CD8-positive, alpha-beta memory T cell (primary cell): ENCODE measurements at regions of chr16 and their contacts with region 1.

Region 1: DNA sequence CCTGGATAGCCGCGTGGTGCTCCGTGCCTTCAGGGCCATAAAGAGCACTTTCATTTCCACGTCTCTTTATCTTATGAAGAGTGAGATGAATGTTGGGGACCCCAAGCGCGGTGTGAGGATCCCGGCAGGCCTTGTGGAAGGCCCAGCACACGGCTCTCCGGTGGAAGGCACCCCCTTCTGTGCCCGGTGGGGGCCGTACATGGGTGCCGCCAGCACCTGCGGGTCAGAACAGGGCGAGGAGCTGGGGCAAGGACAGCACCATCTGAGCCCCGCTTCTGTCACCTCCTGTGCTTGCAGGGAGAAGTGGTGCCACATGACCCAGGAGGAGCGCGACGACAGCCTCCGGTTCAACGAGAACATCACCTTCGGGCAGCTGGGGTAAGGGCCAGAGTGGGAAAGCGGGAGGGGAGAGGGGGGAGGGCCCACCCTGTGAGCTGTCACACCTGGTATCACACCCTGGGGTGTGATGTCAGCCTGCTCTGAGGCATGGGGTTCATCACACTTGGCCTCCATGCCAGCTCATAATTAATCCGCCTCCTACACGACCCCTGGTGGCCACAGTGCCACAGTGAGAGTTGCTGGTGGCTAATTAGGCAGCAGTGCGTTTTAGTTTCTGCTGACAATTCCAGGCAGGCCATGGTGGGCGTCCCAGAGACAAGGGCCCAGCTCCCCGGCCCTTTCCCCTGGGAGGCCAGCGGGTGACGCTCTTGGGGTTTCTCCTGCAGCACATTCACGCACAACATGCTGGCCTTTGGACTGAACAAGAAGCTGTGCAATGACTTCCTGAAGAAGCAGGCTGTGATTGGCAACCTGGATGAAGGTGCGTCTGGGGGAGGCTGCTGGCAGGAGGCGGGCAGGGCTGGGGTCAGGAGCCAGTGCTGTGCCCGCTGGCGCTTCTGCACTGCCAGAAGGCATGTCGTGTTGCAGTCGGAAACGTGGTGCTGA is 25.7 kb downstream of the CIBAR2 start:
- DNase-seq: peak; percentile 47 to 85 (median 67)
- H3K4me3 ChIP-seq: no peak overlapping the region
- H3K4me3 Mint-ChIP-seq: no peak overlapping the region
- H3K27ac ChIP-seq: no peak overlapping the region
- H3K27ac Mint-ChIP-seq: peak overlapping the region in 2 of 8 donors; percentile 29 to 35
- H3K4me1 ChIP-seq: peaks cover 10% of the 10 kb centered on the region
- H3K4me1 Mint-ChIP-seq: peaks cover 7 to 31% (median 7%) of the 10 kb centered on the region in 3 donors
- H3K27me3 ChIP-seq: no peaks in the 10 kb centered on the region
- H3K27me3 Mint-ChIP-seq: no peaks in the 10 kb centered on the region

Region 2: GRCh38 chr16:84726079-84726668 is 360.4 kb before region 1 on chr16:
- CTCF ChIA-PET with region 1: no interaction called
- POLR2A ChIA-PET with region 1: no interaction called
- DNase-seq: peak; percentile 62 to 85 (median 77)
- H3K4me3 ChIP-seq: peak overlapping the region; percentile 15
- H3K4me3 Mint-ChIP-seq: peak overlapping the region in 6 of 7 donors; percentile 29 to 68 (median 62)
- H3K27ac ChIP-seq: no peak overlapping the region
- H3K27ac Mint-ChIP-seq: peak overlapping the region in 4 of 8 donors; percentile 56 to 83 (median 78)
- H3K4me1 ChIP-seq: peaks cover 31% of the 10 kb centered on the region
- H3K4me1 Mint-ChIP-seq: peaks cover 47 to 71% (median 70%) of the 10 kb centered on the region in 3 donors
- H3K27me3 ChIP-seq: no peaks in the 10 kb centered on the region
- H3K27me3 Mint-ChIP-seq: no peaks in the 10 kb centered on the region

Region 3: DNA sequence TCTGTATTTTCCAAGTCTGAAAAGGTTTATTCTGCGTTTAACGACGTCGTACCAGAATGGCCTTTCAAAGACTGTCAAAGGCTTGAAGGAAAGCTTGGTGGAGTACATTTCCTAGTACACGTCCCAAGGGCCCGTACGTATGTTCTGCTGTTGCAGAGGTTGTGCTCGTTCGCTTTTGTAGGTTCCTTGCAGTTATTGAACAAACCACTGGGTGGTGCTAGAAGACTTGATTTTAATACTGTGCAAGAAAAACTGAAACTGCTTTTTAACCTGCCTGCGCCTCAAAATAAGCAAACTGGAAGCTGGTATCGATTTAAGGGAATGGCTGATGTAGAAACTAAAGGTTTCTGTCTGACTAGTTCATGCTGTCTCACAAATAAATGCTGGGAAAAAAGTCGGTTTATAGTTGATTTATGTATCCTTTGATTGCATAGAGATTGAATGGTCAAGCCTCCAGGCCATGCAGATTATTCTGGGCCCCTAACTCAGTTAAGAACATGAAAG is 332.2 kb before region 1 on chr16:
- CTCF ChIA-PET with region 1: interaction called, 13 read pairs
- POLR2A ChIA-PET with region 1: no interaction called
- DNase-seq: peak; percentile 36 to 78 (median 69)
- H3K4me3 ChIP-seq: peak overlapping the region; percentile 21
- H3K4me3 Mint-ChIP-seq: peak overlapping the region in 6 of 7 donors; percentile 51 to 78 (median 64)
- H3K27ac ChIP-seq: peak overlapping the region; percentile 21
- H3K27ac Mint-ChIP-seq: peak overlapping the region; percentile 18 to 88 (median 48)
- H3K4me1 ChIP-seq: peaks cover 47% of the 10 kb centered on the region
- H3K4me1 Mint-ChIP-seq: peaks cover 69 to 92% (median 91%) of the 10 kb centered on the region in 3 donors
- H3K27me3 ChIP-seq: no peaks in the 10 kb centered on the region
- H3K27me3 Mint-ChIP-seq: no peaks in the 10 kb centered on the region

Region 4: DNA sequence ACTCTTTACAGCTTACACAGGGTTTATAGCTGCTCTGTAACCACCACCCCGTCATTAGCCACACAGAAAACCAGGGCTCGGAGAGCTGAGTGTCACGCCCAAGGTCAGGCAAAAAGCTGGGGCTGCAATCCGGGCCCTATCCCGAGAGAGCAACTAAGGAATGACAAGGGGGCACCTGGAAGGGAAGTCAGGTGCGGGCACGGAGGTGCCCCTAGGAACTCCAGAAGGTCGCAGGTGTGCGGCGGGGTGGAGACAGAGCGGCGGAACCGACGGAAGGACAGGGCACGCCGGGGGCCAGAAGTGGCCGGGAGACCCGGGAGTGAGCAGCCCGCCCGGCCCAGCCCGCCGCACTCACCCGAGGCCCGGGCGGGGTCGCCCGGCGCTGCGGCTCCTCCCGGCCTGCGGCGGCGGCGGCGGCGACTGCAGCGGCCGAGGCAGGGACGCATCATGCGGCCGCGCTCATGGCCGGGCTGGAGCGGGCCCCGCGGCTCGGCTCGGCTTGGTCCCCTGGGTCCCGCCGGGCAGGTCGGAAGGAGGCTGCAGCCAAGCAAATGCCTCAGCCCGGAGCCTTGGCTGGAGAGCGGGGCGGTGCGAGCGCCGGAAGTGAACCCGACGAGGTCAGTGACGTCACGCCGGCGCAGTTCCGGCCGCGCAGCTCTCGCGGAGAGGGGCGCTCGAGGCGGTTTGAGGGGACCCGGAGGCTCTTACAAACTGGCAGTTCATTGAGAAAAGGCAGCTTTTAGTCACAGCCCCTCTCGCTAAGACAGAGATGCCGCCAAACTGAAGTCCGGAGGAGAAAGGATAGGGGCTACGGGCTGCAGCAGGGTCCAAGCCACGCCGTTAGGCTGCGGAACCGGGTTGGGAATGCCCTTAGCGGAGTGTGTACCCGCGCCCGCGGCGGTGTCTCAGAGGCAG is 75.4 kb before region 1 on chr16 and contains the start of gene ZDHHC7:
- CTCF ChIA-PET with region 1: interaction called, 41 read pairs
- POLR2A ChIA-PET with region 1: interaction called, 7 read pairs
- DNase-seq: peak; percentile 80 to 90 (median 85)
- H3K4me3 ChIP-seq: peak within 1 kb of the TSS; percentile 81
- H3K4me3 Mint-ChIP-seq: peak within 1 kb of the TSS; percentile 98 to 99 (median 99)
- H3K27ac ChIP-seq: peak within 1 kb of the TSS; percentile 97
- H3K27ac Mint-ChIP-seq: peak within 1 kb of the TSS; percentile 96 to 100 (median 100)
- H3K4me1 ChIP-seq: peaks cover 28% of the 10 kb centered on the region
- H3K4me1 Mint-ChIP-seq: peaks cover 35 to 51% (median 50%) of the 10 kb centered on the region in 3 donors
- H3K27me3 ChIP-seq: no peaks in the 10 kb centered on the region
- H3K27me3 Mint-ChIP-seq: peaks cover 0 to 7% of the 10 kb centered on the region in 2 donors
- total RNA-seq, gene ZDHHC7: 31.6 to 32.6 TPM

Region 5: DNA sequence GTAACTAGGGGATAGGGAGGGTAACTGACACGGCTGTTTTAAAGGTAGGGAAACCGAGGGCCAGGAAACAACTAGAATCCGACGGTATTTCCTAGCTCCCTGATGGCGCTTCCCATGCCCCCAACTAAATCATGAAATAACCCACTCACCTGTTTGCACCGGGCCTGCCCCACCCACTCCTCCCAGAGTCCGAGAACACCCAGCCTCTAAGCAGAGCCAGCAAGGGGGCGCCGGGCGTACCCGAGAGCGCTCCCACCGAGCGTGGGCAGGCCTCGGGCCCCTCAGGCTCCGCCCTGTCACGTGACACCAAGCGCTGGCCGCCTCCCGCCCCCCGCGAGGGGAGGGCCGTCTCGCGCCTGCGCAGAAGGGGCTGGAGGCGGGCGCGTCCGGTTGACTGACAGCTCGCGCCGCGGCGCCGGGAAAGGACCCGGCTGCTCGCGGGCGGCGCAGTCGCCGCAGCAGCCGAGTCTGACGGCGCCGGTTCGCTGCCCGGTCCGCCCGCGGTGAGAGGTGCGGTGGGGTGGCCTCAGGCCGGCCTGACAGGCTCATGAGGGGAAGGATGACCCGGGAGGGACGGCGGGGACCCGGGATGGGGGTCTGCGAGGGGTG is 59.2 kb before region 1 on chr16 and contains the start of gene KIAA0513:
- CTCF ChIA-PET with region 1: interaction called, 27 read pairs
- POLR2A ChIA-PET with region 1: interaction called, 6 read pairs
- DNase-seq: peak; percentile 96 to 98 (median 97)
- H3K4me3 ChIP-seq: peak within 1 kb of the TSS; percentile 57
- H3K4me3 Mint-ChIP-seq: peak within 1 kb of the TSS; percentile 92 to 98 (median 95)
- H3K27ac ChIP-seq: peak within 1 kb of the TSS; percentile 72
- H3K27ac Mint-ChIP-seq: peak within 1 kb of the TSS; percentile 85 to 99 (median 96)
- H3K4me1 ChIP-seq: peaks cover 27% of the 10 kb centered on the region
- H3K4me1 Mint-ChIP-seq: peaks cover 27 to 46% (median 36%) of the 10 kb centered on the region in 3 donors
- H3K27me3 ChIP-seq: no peaks in the 10 kb centered on the region
- H3K27me3 Mint-ChIP-seq: no peaks in the 10 kb centered on the region
- total RNA-seq, gene KIAA0513: 13.2 to 13.5 TPM

Region 6: DNA sequence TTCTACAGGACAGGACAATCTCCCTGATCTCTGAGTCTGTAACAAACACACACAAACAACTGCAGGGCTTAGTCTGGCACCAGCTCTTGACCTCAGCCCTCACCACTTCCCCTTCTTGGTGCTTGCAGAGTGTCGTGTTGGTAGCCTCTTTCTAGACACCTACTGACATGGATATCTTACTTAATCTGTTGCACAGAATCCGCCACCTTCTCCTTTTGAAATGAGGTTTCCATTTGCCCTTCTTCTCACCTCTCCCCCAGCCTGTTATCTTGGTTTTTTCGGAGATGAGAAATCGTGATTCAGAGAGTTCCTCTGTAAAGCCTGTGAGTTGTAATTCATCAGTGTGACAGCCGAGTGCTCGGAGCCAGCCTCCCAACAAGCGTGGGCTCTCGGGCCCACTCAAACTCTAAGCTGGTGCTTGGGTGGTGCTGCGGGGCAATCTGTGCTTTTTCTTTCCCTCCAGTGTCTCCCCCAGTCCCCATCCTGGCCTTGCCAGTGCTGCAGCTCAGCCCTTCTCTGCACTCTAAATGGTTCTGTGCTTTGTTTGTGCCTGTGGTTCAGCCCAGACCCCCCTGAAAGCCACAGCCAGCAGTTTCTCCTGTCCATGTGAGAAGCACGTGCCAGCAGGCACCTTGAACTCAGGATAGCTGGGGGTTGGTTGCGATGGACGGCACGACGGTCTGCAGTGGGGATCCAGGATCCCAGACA is 31.0 kb before region 1 on chr16:
- CTCF ChIA-PET with region 1: interaction called, 22 read pairs
- POLR2A ChIA-PET with region 1: interaction called, 6 read pairs
- DNase-seq: peak; percentile 67 to 91 (median 74)
- H3K4me3 ChIP-seq: peak overlapping the region; percentile 50
- H3K4me3 Mint-ChIP-seq: peak overlapping the region; percentile 33 to 73 (median 67)
- H3K27ac ChIP-seq: peak overlapping the region; percentile 62
- H3K27ac Mint-ChIP-seq: peak overlapping the region; percentile 81 to 97 (median 86)
- H3K4me1 ChIP-seq: peaks cover 39% of the 10 kb centered on the region
- H3K4me1 Mint-ChIP-seq: peaks cover 37 to 51% (median 41%) of the 10 kb centered on the region in 3 donors
- H3K27me3 ChIP-seq: no peaks in the 10 kb centered on the region
- H3K27me3 Mint-ChIP-seq: no peaks in the 10 kb centered on the region

Region 7: DNA sequence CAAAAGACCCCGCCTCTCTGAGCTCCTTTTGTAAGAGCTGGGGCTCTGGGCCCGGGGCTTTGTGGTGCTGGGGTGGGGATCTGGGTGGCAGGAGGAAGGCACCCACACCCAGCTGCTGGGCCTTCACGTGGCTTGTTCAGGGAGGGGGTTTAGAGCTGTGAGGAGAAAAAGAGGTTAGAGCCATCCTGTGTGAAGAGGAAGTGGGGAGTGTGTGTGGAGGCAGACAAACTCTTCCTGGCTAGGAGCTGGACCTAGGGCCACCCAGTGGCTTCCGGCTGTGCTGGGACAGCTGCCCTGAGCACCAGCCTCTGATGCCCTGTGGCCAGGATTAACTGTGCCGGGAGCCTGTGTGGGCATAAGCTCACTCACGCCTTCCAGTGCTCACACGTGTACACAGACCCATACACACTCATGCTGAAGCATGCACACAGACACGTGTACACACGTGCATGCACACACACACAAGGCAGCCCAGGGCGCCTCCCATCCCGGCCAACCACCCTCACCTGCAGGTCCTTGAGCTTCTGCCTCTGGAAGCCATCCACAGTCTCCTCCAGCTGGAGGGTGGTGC is 18.3 kb after region 1 on chr16:
- CTCF ChIA-PET with region 1: interaction called, 13 read pairs
- POLR2A ChIA-PET with region 1: no interaction called
- DNase-seq: peak; percentile 12 to 65 (median 40)
- H3K4me3 ChIP-seq: peak overlapping the region; percentile 37
- H3K4me3 Mint-ChIP-seq: peak overlapping the region in 6 of 7 donors; percentile 37 to 90 (median 78)
- H3K27ac ChIP-seq: no peak overlapping the region
- H3K27ac Mint-ChIP-seq: peak overlapping the region; percentile 81 to 95 (median 90)
- H3K4me1 ChIP-seq: peaks cover 43% of the 10 kb centered on the region
- H3K4me1 Mint-ChIP-seq: peaks cover 45 to 56% (median 49%) of the 10 kb centered on the region in 3 donors
- H3K27me3 ChIP-seq: no peaks in the 10 kb centered on the region
- H3K27me3 Mint-ChIP-seq: no peaks in the 10 kb centered on the region